A549 (cell line): ENCODE measurements at regions of chr11 and their contacts with region 1.

Region 1: GRCh38 chr11:62081378-62082291 is 42.2 kb upstream of the INCENP start:
- DNase-seq: peak; percentile 72 to 76
- ATAC-seq: peak; percentile 89 to 94
- H3K4me3 ChIP-seq: no peak overlapping the region
- H3K27ac ChIP-seq: peak overlapping the region; percentile 20 to 66; a peak in 5 of 6 replicates
- H3K4me1 ChIP-seq: peaks cover 9% of the 10 kb centered on the region; the same call in 2 of the 3 replicates
- CTCF ChIP-seq: peak; percentile 96
- EP300 ChIP-seq: no peak
- POLR2A ChIP-seq: no peak
- RAD21 ChIP-seq: peak; percentile 98 to 99

Region 2: DNA sequence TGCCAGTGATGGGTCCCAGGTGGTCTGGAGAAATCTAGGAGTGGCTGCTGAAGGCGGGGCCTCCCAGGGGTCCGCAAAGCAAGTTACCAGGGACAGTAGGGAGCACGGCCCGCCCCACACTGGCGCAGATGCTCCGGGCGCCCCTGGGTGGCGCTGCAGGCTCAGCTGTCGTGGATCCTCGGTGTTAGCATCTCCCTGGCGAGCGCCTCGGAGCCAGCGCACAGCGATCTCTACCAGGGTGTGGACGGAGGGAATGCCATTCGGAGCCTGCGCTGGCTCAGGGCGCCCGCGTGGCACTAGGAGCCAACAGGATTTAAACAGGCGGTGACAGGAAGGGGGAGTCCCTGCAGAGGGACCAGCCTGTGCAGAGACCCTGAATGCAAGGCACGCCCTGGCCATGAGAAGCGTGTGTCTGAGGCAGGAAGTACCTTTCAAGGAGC is 210.5 kb before region 1 on chr11:
- CTCF ChIA-PET with region 1: interaction called, 56 read pairs
- POLR2A ChIA-PET with region 1: interaction called, 5 read pairs
- DNase-seq: peak; percentile 82 to 91
- ATAC-seq: peak; percentile 80 to 93
- H3K4me3 ChIP-seq: no peak overlapping the region
- H3K27ac ChIP-seq: peak overlapping the region; percentile 47 to 52; a peak in 5 of 6 replicates
- H3K4me1 ChIP-seq: peaks cover 31% of the 10 kb centered on the region
- CTCF ChIP-seq: peak; percentile 95
- EP300 ChIP-seq: no peak
- POLR2A ChIP-seq: no peak
- RAD21 ChIP-seq: peak; percentile 95 to 97

Region 3: GRCh38 chr11:61899146-61899841 is 182.3 kb before region 1 on chr11:
- CTCF ChIA-PET with region 1: interaction called, 406 read pairs
- POLR2A ChIA-PET with region 1: no interaction called
- DNase-seq: peak; percentile 87 to 96
- ATAC-seq: peak; percentile 72 to 92
- H3K4me3 ChIP-seq: no peak overlapping the region
- H3K27ac ChIP-seq: peak overlapping the region; percentile 66 to 82; a peak in 5 of 6 replicates
- H3K4me1 ChIP-seq: peaks cover 19% of the 10 kb centered on the region
- CTCF ChIP-seq: peak; percentile 97
- EP300 ChIP-seq: no peak
- POLR2A ChIP-seq: no peak
- RAD21 ChIP-seq: peak; percentile 92 to 93

Region 4: GRCh38 chr11:61954851-61955421 is 126.7 kb before region 1 on chr11:
- CTCF ChIA-PET with region 1: interaction called, 38 read pairs
- POLR2A ChIA-PET with region 1: no interaction called
- DNase-seq: peak; percentile 62 to 70
- ATAC-seq: peak; percentile 65 to 69
- H3K4me3 ChIP-seq: no peak overlapping the region
- H3K27ac ChIP-seq: peak overlapping the region; percentile 80 to 88
- H3K4me1 ChIP-seq: peaks cover 50% of the 10 kb centered on the region
- CTCF ChIP-seq: no peak
- EP300 ChIP-seq: no peak
- POLR2A ChIP-seq: no peak
- RAD21 ChIP-seq: peak in 1 of 2 experiments; percentile 27; a peak in 2 of 5 replicates

Region 5: DNA sequence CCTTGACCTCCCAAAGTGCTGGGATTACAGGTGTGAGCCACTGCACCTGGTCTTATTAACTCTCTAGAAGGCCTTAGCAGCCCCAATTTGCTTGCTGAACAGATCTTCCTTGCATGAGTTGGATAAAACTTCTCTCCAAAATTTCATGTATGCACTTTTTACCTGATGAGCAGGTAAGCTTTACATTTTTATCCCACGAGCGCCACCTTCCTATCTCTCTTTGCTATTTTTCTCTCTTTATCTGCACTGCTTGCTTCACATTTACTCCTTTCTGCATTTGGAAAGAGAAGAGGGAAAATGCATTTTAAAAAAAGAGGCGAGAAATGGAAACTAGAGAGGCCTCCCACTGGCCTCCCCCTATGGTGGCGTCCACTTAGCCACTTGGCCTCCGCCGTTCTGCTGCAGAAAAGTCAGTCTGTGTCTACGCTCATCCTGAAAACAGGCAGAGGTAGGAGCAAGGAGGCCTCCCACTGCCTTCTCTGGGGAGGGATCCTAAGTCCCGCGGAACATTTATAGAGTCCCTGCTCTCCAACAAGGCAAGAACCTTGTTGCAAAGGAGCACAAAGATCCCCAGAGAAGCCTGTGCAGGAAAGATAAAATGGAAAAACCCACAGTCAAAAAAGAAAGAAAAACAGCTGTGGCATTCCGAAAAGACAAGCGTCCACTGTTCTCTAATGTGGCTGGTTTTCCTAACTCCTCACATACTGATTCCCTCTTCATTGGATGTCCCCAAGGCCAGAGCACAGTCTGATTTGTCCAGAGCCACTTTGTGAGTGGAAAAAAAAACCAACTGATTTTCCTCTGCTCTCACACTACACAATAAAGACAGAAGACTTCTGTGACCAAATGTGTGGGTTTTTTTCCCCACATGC is 20.0 kb before region 1 on chr11:
- CTCF ChIA-PET with region 1: interaction called, 56 read pairs
- POLR2A ChIA-PET with region 1: no interaction called
- DNase-seq: no peak
- ATAC-seq: no peak
- H3K4me3 ChIP-seq: no peak overlapping the region
- H3K27ac ChIP-seq: no peak overlapping the region
- H3K4me1 ChIP-seq: no peaks in the 10 kb centered on the region
- CTCF ChIP-seq: no peak
- EP300 ChIP-seq: no peak
- POLR2A ChIP-seq: no peak
- RAD21 ChIP-seq: no peak

Region 6: DNA sequence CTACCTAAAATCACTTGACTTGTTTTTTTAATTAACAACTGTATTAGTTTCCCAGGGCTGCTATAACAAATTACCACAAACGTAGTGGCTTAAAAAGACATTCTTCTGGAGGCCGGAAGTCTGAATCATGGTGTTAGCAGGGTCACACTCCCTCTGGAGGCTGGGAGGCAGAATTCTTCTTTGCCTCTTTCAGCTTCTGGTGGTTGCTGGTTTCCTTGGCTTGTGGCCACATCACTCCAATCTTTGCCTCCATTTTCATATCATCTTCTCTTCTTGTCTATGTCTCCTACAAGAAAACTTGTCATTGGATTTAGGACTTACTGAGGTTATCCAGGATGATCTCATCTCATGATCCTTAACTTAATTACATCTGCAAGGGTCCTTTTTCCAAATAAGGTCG is 34.8 kb after region 1 on chr11:
- CTCF ChIA-PET with region 1: interaction called, 10 read pairs
- POLR2A ChIA-PET with region 1: no interaction called
- DNase-seq: peak in 1 of 2 experiments; percentile 35
- ATAC-seq: no peak
- H3K4me3 ChIP-seq: no peak overlapping the region
- H3K27ac ChIP-seq: no peak overlapping the region
- H3K4me1 ChIP-seq: no peaks in the 10 kb centered on the region
- CTCF ChIP-seq: no peak
- EP300 ChIP-seq: no peak
- POLR2A ChIP-seq: no peak
- RAD21 ChIP-seq: no peak

Region 7: DNA sequence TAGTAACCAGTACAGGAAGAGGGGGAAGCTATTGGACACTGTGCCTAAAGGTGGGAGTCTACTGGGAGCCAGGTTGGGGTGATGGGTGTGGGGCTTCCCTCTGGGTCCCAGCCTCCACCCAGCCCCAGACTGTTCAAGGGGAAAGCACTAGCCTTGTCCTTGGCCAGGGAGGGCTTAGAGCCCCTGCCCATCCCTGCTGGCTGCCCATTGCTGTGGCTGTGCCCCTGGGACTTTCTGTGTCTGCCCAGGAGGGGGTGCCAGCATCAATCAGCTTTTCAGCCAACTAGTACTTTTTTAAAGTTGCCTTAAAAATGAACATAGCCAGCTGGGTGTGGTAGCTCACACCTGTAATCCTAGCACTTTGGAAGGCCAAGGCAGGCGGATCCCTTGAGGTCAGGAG is 62.1 kb after region 1 on chr11:
- CTCF ChIA-PET with region 1: no interaction called
- POLR2A ChIA-PET with region 1: no interaction called
- DNase-seq: no peak
- ATAC-seq: peak in 1 of 2 experiments; percentile 28; a peak in 2 of 6 replicates
- H3K4me3 ChIP-seq: no peak overlapping the region
- H3K27ac ChIP-seq: no peak overlapping the region
- H3K4me1 ChIP-seq: no peaks in the 10 kb centered on the region
- CTCF ChIP-seq: no peak
- EP300 ChIP-seq: no peak
- POLR2A ChIP-seq: no peak
- RAD21 ChIP-seq: no peak

Region 8: GRCh38 chr11:62439785-62440602 is 358.4 kb after region 1 on chr11:
- CTCF ChIA-PET with region 1: no interaction called
- POLR2A ChIA-PET with region 1: no interaction called
- DNase-seq: no peak
- ATAC-seq: peak; percentile 28 to 56; a peak in 4 of 6 replicates
- H3K4me3 ChIP-seq: no peak overlapping the region
- H3K27ac ChIP-seq: peak overlapping the region; percentile 40 to 70; a peak in 5 of 6 replicates
- H3K4me1 ChIP-seq: peaks cover 13% of the 10 kb centered on the region
- CTCF ChIP-seq: no peak
- EP300 ChIP-seq: no peak
- POLR2A ChIP-seq: no peak
- RAD21 ChIP-seq: no peak